ENCODE measurements at regions of chr6 and their contacts with region 1.

Region 1: DNA sequence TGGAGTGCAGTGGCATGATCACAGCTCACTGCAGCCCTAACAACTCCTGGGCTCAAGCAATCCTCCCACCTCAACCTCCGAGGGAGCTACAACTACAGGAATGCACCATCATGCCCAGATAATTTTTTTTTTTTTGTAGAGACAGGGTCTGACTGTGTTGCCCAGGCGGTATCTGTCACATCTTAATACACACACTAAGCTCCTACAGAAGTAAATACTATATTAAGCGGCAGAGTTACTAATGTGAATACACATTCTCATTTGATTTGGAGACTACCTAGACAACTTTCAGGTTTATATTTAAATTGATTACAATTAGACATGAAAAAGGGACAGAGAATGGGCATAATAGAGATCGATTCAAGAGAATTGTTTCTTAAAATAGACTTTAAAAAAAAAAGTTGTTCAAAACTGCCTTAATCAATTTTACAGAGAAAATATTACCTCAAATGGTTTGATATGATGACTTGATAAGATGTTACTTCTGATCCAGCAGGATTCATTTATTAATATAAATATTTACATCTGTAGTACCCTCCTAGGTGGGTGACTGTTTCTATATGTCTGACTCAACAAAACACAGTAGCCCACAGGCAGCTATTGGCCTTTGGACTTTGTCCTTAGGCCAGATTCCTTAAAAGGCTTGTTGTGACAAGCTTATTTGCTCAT is 7.1 kb upstream of the LOC128125822 start:
- DNase-seq: peak; percentile 98
- ATAC-seq: peak; percentile 83
- H3K4me3 ChIP-seq: peak overlapping the region; percentile 24 to 63 (median 42)
- H3K27ac ChIP-seq: peak overlapping the region; percentile 83
- H3K4me1 ChIP-seq: peaks cover 98% of the 10 kb centered on the region
- H3K27me3 ChIP-seq: no peaks in the 10 kb centered on the region
- CTCF ChIP-seq: no peak
- EP300 ChIP-seq: peak; percentile 76 to 95
- POLR2A ChIP-seq: peak in 1 of 2 experiments; percentile 43; a peak in 1 of 4 replicates
- RAD21 ChIP-seq: no peak

Region 2: GRCh38 chr6:63521475-63522210 is 43.5 kb before region 1 on chr6:
- CTCF ChIA-PET with region 1: no interaction called
- POLR2A ChIA-PET with region 1: interaction called, 32 read pairs
- in situ Hi-C with region 1: loop called (anchors 5 kb)
- intact Hi-C with region 1: no loop called
- DNase-seq: peak; percentile 76
- ATAC-seq: peak; percentile 82
- H3K4me3 ChIP-seq: peak overlapping the region; percentile 49 to 74 (median 68)
- H3K27ac ChIP-seq: peak overlapping the region; percentile 96
- H3K4me1 ChIP-seq: peaks cover 98% of the 10 kb centered on the region
- H3K27me3 ChIP-seq: no peaks in the 10 kb centered on the region
- CTCF ChIP-seq: no peak
- EP300 ChIP-seq: peak in 1 of 2 experiments; percentile 66; a peak in 2 of 4 replicates
- POLR2A ChIP-seq: peak; percentile 38 to 55; a peak in 2 of 4 replicates
- RAD21 ChIP-seq: no peak

Region 3: GRCh38 chr6:63553208-63553607 is 12.0 kb before region 1 on chr6:
- CTCF ChIA-PET with region 1: no interaction called
- POLR2A ChIA-PET with region 1: interaction called, 6 read pairs
- in situ Hi-C with region 1: no loop called
- intact Hi-C with region 1: loop called (anchors 2 kb)
- DNase-seq: no peak
- ATAC-seq: no peak
- H3K4me3 ChIP-seq: no peak overlapping the region
- H3K27ac ChIP-seq: peak overlapping the region; percentile 4
- H3K4me1 ChIP-seq: peaks cover 32% of the 10 kb centered on the region
- H3K27me3 ChIP-seq: no peaks in the 10 kb centered on the region
- CTCF ChIP-seq: no peak
- EP300 ChIP-seq: no peak
- POLR2A ChIP-seq: no peak
- RAD21 ChIP-seq: no peak

Region 4: DNA sequence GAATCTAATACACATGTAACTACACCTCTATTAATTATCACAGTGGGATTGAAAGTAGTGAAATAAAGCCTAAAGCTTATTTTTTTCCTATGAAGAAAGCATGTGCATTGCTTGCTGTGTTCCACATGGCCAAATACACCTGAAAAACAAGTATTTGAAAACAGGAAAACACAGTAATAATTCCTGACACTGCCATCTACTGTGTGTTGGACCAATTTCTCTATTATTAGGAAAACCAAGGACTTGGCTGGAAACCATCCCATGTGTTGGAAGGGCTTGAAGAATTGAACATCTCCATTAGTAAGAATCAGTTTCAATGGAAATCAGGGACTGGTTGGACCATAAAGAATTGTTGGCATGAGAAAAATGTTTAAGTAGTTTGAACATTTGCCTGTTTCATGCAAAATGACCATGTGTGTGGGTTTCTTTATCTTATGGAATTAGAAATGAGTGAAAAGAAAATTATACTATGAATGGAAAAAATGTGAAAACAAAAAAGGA is 194.5 kb after region 1 on chr6:
- CTCF ChIA-PET with region 1: no interaction called
- POLR2A ChIA-PET with region 1: no interaction called
- in situ Hi-C with region 1: no loop called
- intact Hi-C with region 1: no loop called
- DNase-seq: no peak
- ATAC-seq: peak; percentile 49; the same call in 2 of the 3 replicates
- H3K4me3 ChIP-seq: no peak overlapping the region
- H3K27ac ChIP-seq: no peak overlapping the region
- H3K4me1 ChIP-seq: peaks cover 12% of the 10 kb centered on the region
- H3K27me3 ChIP-seq: no peaks in the 10 kb centered on the region
- CTCF ChIP-seq: peak; percentile 24; the same call in 1 of the 2 replicates
- EP300 ChIP-seq: no peak
- POLR2A ChIP-seq: no peak
- RAD21 ChIP-seq: no peak